ENCODE measurements at regions of chr1 and their contacts with region 1.

Region 1: DNA sequence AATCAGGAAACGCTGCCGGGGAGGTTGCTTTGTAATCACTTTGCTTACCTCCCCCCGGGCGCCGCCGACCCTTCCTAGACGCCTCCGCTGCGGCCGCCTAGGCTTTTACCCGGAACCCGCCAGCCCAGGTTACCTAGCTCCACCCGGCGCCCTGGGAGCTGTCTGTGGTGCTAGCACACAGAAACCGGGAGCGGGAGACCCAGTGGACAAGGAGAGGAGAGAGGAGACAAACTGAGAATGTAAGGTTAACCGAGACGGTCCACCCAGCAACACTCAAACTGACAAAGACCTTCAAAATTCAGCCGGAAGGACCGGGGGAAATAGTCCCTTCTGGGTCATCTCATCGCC is 9.8 kb downstream of the BARHL2 start:
- DNase-seq: no peak
- ATAC-seq: peak; percentile 56

Region 2: DNA sequence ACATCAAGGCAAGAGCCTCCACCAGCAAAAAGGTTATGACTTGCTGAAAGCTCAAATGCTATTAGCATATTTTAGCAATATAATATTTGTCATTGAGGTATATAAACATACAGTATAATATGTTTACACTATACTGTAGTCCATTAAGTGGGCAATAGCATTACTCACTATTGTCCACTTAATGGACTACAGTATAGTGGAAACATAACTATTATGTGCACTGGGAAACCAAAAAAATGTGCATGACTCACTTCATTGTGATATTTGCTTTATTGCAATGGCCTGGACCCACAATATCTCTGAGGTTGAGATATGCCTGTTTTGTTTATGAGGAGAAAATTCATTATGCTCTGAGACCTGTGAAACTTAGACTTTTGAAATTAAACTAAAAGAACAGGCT is 290.2 kb before region 1 on chr1:
- intact Hi-C with region 1: no loop called
- DNase-seq: no peak
- ATAC-seq: no peak

Region 3: GRCh38 chr1:92439291-92439690 is 1732.0 kb after region 1 on chr1:
- intact Hi-C with region 1: loop called (anchors 5 kb)
- DNase-seq: no peak
- ATAC-seq: no peak